ENCODE measurements at regions of chr19 and their contacts with region 1.

Region 1: GRCh38 chr19:39532233-39533002 is at the start of gene EID2B:
- DNase-seq: peak; percentile 96 to 99 (median 96)
- H3K4me3 ChIP-seq: peak within 1 kb of the TSS; percentile 68 to 92 (median 77)
- H3K4me3 Mint-ChIP-seq: peak within 1 kb of the TSS; percentile 93 to 95
- H3K27ac ChIP-seq: peak within 1 kb of the TSS; percentile 41 to 84
- H3K27ac Mint-ChIP-seq: peak within 1 kb of the TSS; percentile 76 to 92 (median 88)
- H3K4me1 ChIP-seq: peaks cover 8 to 11% of the 10 kb centered on the region in 2 donors
- H3K4me1 Mint-ChIP-seq: peaks cover 11% of the 10 kb centered on the region
- H3K27me3 ChIP-seq: no peaks in the 10 kb centered on the region
- H3K27me3 Mint-ChIP-seq: peaks cover 0 to 2% (median 0%) of the 10 kb centered on the region in 3 donors
- CTCF ChIP-seq: peak; percentile 98
- polyA plus RNA-seq, gene EID2B: 1.2 to 2.6 (median 2.4) TPM

Region 2: GRCh38 chr19:39390755-39391592 is 141.4 kb before region 1 on chr19 and contains the starts of genes MED29 and PAF1:
- intact Hi-C with region 1: loop called (anchors 5 to 10 kb)
- DNase-seq: peak; percentile 99 to 100 (median 99)
- H3K4me3 ChIP-seq: peak within 1 kb of the TSS; percentile 77 to 97 (median 79)
- H3K4me3 Mint-ChIP-seq: peak within 1 kb of the TSS; percentile 89 to 96
- H3K27ac ChIP-seq: peak within 1 kb of the TSS; percentile 85 to 91
- H3K27ac Mint-ChIP-seq: peak within 1 kb of the TSS; percentile 97 to 99 (median 98)
- H3K4me1 ChIP-seq: peaks cover 21 to 22% of the 10 kb centered on the region in 2 donors
- H3K4me1 Mint-ChIP-seq: peaks cover 19% of the 10 kb centered on the region
- H3K27me3 ChIP-seq: no peaks in the 10 kb centered on the region
- H3K27me3 Mint-ChIP-seq: peaks cover 0 to 3% (median 0%) of the 10 kb centered on the region in 3 donors
- CTCF ChIP-seq: no peak
- polyA plus RNA-seq, gene MED29: 35.8 to 38.2 (median 37.0) TPM
- polyA plus RNA-seq, gene PAF1: 22.7 to 37.8 (median 25.2) TPM

Region 3: DNA sequence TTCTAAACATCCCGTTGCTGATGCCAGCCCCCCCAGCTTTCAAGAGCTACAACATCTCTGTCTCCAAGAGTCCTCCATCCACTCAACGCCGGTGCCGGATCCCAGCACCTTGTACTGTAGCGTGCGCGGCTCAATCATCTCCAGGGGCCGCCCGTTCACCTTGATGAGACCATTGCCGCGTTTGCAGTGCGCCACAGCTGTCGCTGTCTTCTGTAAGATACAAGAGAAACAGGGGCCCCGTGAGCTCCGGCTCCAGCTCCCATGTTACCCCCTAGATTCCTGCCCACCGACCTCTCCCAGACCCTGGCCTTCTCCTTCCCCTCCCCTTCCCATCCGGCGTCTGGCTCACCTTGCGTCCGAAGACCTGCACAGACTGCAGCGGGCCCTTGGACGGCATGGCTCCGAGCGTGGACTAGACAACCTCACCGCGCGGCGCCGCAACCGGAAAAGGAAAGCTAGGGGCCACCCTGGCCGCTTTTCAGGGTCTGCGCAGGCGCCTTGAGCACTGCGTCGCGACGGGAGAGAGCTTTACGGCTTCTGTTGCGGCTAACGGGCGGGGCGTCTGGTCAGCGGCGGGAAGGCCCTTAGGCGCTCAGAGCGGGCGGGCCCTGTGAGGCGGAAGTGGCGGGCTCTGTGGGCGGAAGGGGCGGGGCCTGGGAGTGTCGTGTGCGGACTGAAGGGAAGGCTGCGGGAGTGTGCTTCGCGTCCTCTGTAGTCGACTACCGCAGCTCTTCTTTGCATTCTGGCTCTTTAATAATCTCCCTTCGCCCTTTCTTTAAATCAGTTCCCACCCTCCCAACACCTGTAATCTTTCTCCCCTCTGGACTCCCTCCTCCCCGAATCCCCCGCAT is 96.7 kb before region 1 on chr19 and contains the start of gene RPS16:
- intact Hi-C with region 1: loop called (anchors 5 to 10 kb)
- DNase-seq: peak; percentile 98 to 99 (median 98)
- H3K4me3 ChIP-seq: peak within 1 kb of the TSS; percentile 54 to 96 (median 95)
- H3K4me3 Mint-ChIP-seq: peak within 1 kb of the TSS; percentile 99
- H3K27ac ChIP-seq: peak within 1 kb of the TSS; percentile 82 to 89
- H3K27ac Mint-ChIP-seq: peak within 1 kb of the TSS; percentile 94 to 99 (median 97)
- H3K4me1 ChIP-seq: peaks cover 32 to 38% of the 10 kb centered on the region in 2 donors
- H3K4me1 Mint-ChIP-seq: peaks cover 40% of the 10 kb centered on the region
- H3K27me3 ChIP-seq: peaks cover 0 to 2% of the 10 kb centered on the region in 2 donors
- H3K27me3 Mint-ChIP-seq: peaks cover 6 to 12% (median 9%) of the 10 kb centered on the region in 3 donors
- CTCF ChIP-seq: no peak
- polyA plus RNA-seq, gene RPS16: 689 to 2,619 (median 1,038) TPM

Region 4: DNA sequence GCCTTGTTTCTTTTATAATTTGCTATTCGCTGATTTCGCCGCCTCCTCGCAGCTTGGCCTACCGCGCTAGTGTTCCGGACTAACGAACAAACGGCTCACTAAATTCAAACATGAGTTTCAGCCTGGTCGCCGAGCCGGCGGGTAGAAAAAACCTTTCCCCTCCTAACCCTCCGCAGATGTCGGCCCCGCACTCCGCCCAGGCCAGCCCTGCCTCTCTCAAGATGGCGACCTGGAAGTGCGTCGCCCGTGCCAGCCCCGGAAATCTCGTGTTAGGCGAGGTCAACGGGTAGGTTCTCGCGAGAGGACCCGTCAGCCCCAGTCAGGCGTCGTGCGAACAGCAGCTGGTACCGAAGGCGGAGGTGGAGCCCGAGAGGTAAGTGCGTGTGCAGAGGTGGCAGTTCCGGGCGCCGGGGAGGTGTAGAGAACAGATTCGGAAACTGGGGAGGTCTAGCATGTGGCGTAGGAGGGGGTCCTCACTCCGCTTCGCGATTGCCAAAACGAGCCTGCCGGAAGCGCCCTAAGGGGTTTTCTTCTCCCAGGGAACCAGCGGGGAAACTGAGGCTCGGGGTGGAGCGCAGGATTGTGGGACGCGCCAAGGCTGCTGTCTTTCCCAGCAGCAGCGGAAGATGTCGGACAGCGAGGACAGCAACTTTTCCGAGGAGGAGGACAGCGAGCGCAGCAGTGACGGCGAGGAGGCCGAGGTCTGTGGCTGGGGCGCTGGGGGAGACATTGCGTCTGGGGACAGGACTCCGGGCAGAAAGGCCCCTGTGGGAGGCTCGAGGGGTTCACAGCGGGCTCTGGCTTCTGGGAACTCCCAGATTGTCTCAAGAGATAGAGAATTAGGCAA is 86.9 kb before region 1 on chr19 and contains the start of gene SUPT5H:
- intact Hi-C with region 1: loop called (anchors 5 to 10 kb)
- DNase-seq: peak; percentile 97
- H3K4me3 ChIP-seq: peak within 1 kb of the TSS; percentile 55 to 100 (median 95)
- H3K4me3 Mint-ChIP-seq: peak within 1 kb of the TSS; percentile 97 to 98
- H3K27ac ChIP-seq: peak within 1 kb of the TSS; percentile 94 to 100
- H3K27ac Mint-ChIP-seq: peak within 1 kb of the TSS; percentile 89 to 100 (median 99)
- H3K4me1 ChIP-seq: peaks cover 36 to 40% of the 10 kb centered on the region in 2 donors
- H3K4me1 Mint-ChIP-seq: peaks cover 51% of the 10 kb centered on the region
- H3K27me3 ChIP-seq: no peaks in the 10 kb centered on the region
- H3K27me3 Mint-ChIP-seq: peaks cover 0 to 5% (median 3%) of the 10 kb centered on the region in 3 donors
- CTCF ChIP-seq: no peak
- polyA plus RNA-seq, gene SUPT5H: 43.6 to 83.2 (median 50.7) TPM

Region 5: DNA sequence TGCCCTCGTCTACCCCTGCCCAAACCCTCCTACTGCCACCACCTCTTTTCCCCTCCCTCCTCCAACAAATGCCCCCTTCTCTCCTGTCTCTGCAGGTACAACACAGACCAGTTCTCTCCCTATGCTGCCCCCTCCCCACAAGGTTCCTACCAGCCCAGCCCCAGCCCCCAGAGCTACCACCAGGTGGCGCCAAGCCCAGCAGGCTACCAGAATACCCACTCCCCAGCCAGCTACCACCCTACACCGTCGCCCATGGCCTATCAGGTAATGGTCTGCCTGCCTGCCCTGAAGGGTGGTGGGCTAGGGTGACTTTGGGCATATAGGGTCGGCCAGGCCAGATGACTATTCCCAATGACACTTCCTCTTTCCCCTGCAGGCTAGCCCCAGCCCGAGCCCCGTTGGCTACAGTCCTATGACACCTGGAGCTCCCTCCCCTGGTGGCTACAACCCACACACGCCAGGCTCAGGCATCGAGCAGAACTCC is 58.2 kb before region 1 on chr19:
- intact Hi-C with region 1: loop called in 1 of 2 experiments (anchors 5 kb)
- DNase-seq: peak; percentile 32 to 60 (median 46)
- H3K4me3 ChIP-seq: no peak overlapping the region
- H3K4me3 Mint-ChIP-seq: no peak overlapping the region
- H3K27ac ChIP-seq: peak overlapping the region in 1 of 2 donors; percentile 52
- H3K27ac Mint-ChIP-seq: peak overlapping the region in 5 of 7 donors; percentile 32 to 74 (median 53)
- H3K4me1 ChIP-seq: no peaks in the 10 kb centered on the region
- H3K4me1 Mint-ChIP-seq: no peaks in the 10 kb centered on the region
- H3K27me3 ChIP-seq: no peaks in the 10 kb centered on the region
- H3K27me3 Mint-ChIP-seq: peaks cover 0 to 2% (median 0%) of the 10 kb centered on the region in 3 donors
- CTCF ChIP-seq: peak; percentile 75

Region 6: DNA sequence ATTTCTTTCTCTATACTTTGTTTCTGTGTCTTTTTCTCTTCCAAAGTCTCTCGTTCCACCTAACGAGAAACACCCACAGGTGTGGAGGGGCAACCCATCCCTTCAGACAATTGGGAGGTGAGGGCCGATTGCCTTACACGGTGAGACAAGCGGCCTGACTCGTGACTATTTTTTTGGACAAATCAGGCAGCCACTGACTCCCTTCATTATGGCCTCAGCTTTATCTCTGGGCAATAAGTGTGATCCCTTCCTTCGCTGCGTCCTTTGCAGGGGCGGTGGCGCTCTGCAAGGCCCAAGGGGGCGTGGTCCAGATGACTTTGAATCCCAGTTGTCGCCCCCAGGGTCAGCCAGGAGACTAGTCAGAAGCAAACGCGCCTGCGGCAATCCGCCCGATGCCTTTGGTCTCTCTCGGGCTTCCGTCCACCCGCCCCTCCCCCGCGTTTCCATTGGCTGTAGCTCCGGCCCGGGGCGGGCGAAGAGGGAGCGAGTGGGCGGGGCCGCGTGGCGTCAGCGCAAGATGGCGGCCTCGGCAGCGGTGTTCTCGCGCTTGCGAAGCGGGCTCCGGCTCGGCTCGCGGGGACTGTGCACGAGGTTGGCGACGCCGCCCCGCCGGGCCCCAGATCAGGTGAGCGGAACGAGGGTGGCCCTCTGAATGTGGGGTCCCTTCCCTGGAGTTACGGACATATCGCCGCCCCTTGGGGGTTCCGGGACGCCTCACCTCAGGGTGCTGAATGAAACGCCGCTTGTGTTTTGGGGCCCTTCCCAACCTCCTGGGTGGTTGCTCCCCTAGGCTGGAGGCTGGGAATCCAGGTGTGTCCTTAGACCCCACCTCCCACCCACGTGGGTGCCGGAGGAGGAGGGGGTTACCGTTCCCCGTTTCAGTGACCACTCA is 51.8 kb before region 1 on chr19 and contains the start of gene TIMM50:
- intact Hi-C with region 1: loop called in 1 of 2 experiments (anchors 5 kb)
- DNase-seq: peak; percentile 88 to 92 (median 91)
- H3K4me3 ChIP-seq: peak within 1 kb of the TSS; percentile 75 to 93 (median 85)
- H3K4me3 Mint-ChIP-seq: peak within 1 kb of the TSS; percentile 87 to 96
- H3K27ac ChIP-seq: peak within 1 kb of the TSS; percentile 41 to 85
- H3K27ac Mint-ChIP-seq: peak within 1 kb of the TSS; percentile 87 to 98 (median 95)
- H3K4me1 ChIP-seq: peaks cover 19% of the 10 kb centered on the region in 2 donors
- H3K4me1 Mint-ChIP-seq: peaks cover 22% of the 10 kb centered on the region
- H3K27me3 ChIP-seq: no peaks in the 10 kb centered on the region
- H3K27me3 Mint-ChIP-seq: peaks cover 0 to 2% (median 0%) of the 10 kb centered on the region in 3 donors
- CTCF ChIP-seq: no peak
- polyA plus RNA-seq, gene TIMM50: 22.0 to 54.6 (median 43.8) TPM